GM18951 (cell line): ENCODE measurements at regions of chr5 and their contacts with region 1.

Region 1: DNA sequence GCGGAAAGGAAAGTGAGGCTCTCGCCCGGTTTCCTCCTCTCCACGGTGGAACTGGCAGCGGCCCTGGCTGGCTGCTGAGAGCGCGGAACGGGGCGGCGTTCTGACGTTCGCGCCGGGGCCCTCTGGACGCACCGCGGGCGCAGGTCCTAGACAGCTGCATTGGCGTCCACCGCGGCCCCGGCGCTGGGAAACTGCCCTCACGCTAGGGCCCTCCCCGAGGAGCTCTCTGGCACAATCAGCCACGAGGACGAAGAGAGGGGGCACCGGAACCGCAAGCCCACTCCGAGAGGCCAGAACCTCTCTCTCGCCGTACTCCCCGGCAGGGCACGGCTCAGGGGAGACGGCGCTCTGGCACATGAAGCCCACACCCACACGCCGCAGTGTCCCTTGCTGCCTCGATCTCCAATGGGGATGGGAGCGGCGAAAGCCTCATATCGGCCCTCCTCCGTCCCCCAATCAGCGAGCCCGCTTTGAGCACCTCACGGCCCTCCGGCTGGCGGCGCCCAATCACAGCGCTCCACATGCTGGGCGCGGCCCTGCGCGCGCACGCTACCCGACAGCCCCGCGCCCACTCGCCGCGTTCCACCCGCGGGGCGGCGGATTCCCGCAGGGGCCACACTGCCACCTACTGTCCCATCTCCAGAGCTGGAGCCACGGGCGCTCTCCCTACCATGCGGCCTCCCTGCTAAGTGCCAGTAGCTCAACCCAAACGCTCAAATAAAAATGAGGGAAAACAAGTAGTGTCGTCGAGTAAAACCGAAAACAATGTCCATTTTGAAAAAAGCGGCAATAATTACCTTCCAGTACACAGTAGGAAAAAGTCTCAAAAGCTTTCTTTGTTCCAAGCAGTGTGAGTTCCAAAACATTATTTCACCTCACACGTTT is 11.8 kb downstream of the MRPS27 start:
- POLR2A ChIP-seq: peak; percentile 99

Region 2: GRCh38 chr5:71782771-71783770 is 525.1 kb before region 1 on chr5:
- in situ Hi-C with region 1: loop called (anchors 25 kb)
- POLR2A ChIP-seq: no peak

Region 3: DNA sequence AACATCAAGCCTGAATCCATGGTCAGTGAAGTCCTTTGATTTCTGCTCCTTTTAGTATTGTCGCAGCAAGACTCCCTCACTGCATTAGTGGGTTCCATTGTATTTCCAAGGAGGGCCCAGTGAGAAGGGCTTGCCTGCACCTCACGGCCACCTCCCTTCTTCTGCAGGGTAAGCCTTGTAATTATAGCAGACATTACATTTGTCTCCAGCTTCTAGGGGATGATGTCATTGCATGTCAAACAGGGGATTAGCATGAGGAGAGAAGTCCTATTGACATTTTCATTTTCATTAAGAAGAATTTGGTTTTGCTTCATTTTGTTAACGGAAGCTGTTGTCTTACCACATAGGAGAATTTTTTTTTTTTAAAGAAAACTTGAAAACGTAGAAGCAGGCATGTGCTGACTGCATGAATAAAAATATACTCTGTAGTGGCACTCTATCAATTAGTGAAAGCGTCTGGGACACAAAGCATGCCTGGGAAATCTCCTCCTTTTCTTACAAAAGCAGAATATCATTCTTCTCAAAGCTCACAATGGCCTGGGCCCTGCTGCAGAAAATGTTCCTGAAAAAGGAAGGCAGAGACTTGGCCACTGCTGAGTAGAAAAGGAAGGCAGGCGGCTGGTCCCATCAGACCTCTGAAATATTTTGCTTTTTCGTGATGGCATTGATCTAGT is 173.8 kb before region 1 on chr5:
- in situ Hi-C with region 1: loop called (anchors 5 kb)
- POLR2A ChIP-seq: no peak

Region 4: DNA sequence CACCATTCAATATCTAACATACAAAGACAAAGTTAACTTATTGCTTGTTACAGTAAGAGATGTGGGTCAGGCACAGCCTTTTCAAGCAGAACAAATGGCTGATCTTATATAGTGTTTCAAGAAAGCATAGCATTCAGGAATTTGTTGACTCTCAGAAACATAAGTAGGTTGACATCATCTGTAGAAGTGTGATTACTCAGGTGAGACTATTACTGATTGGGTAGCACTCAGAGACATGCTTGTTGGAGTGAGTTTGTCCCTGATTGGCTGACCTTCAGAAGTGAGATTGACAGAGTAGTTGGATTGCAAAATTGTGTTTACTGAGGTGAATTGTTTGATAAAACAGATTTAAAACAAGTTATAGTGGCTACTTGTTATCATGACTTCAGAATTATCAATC is 477.6 kb after region 1 on chr5:
- in situ Hi-C with region 1: no loop called
- POLR2A ChIP-seq: no peak